SK-MEL-5 (cell line): ENCODE measurements at regions of chr12 and their contacts with region 1.

Region 1: GRCh38 chr12:10016881-10017280 is 6.5 kb downstream of the CLEC12B start:
- DNase-seq: peak; percentile 45

Region 2: GRCh38 chr12:9948606-9949296 is 68.1 kb before region 1 on chr12:
- in situ Hi-C with region 1: no loop called
- DNase-seq: no peak

Region 3: DNA sequence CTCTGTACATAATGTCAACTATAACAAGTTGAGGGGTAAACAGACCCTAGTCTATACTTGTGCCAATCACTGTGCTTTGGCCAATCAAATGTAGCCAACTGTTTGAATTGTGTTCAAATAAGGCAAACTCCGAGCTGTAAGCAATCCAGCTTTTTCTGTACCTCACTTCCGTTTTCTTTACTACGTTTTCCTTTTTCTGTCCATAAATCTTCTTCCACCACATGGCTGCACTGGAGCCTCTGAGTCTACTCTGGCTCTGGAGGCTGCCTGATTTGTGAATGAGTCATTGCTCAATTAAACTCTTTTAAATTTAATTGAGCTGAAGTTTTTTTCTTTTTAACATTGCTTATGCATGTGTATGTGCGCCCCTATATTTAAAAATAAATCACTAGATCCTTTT is 52.2 kb after region 1 on chr12:
- in situ Hi-C with region 1: no loop called
- DNase-seq: no peak

Region 4: DNA sequence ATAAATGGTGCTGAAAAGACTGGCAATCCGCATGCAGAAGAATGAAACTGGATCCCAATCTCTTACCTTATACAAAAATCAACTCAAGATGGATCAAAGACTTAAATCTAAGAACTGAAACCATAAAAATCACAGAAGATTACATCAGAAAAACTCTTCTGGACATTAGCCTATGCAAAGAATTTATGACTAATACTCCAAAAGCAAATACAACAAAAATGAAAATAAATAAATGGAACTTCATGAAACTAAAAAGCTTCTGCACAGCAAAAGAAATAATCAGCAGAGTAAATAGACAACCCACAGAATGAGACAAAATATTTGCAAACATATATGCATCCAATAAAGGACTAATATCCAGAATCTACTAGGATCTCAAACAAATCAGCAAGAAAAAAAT is 96.2 kb after region 1 on chr12:
- in situ Hi-C with region 1: no loop called
- DNase-seq: no peak

Region 5: GRCh38 chr12:10140001-10140400 is 123.1 kb after region 1 on chr12:
- in situ Hi-C with region 1: loop called (anchors 25 kb)
- DNase-seq: peak; percentile 78

Region 6: GRCh38 chr12:10167588-10167987 is 150.7 kb after region 1 on chr12:
- in situ Hi-C with region 1: no loop called
- DNase-seq: no peak